Activated B cell treated with CpG ODN at 0.5 μM for 24 hours (primary cell): ENCODE measurements at regions of chr10 and their contacts with region 1.

Region 1: GRCh38 chr10:14564268-14564744 is 210.4 kb downstream of the FAM107B start:
- DNase-seq: no peak
- ATAC-seq: peak; percentile 50
- H3K4me3 Mint-ChIP-seq: peak overlapping the region; percentile 55
- H3K27ac Mint-ChIP-seq: peak overlapping the region; percentile 87
- H3K4me1 Mint-ChIP-seq: peaks cover 89% of the 10 kb centered on the region
- H3K27me3 Mint-ChIP-seq: no peaks in the 10 kb centered on the region
- CTCF ChIP-seq: no peak

Region 2: GRCh38 chr10:14385596-14386593 is 178.4 kb before region 1 on chr10:
- CTCF ChIA-PET with region 1: no interaction called
- POLR2A ChIA-PET with region 1: no interaction called
- intact Hi-C with region 1: no loop called
- DNase-seq: no peak
- ATAC-seq: no peak
- H3K4me3 Mint-ChIP-seq: no peak overlapping the region
- H3K27ac Mint-ChIP-seq: no peak overlapping the region
- H3K4me1 Mint-ChIP-seq: peaks cover 17% of the 10 kb centered on the region
- H3K27me3 Mint-ChIP-seq: peaks cover 17% of the 10 kb centered on the region
- CTCF ChIP-seq: no peak

Region 3: DNA sequence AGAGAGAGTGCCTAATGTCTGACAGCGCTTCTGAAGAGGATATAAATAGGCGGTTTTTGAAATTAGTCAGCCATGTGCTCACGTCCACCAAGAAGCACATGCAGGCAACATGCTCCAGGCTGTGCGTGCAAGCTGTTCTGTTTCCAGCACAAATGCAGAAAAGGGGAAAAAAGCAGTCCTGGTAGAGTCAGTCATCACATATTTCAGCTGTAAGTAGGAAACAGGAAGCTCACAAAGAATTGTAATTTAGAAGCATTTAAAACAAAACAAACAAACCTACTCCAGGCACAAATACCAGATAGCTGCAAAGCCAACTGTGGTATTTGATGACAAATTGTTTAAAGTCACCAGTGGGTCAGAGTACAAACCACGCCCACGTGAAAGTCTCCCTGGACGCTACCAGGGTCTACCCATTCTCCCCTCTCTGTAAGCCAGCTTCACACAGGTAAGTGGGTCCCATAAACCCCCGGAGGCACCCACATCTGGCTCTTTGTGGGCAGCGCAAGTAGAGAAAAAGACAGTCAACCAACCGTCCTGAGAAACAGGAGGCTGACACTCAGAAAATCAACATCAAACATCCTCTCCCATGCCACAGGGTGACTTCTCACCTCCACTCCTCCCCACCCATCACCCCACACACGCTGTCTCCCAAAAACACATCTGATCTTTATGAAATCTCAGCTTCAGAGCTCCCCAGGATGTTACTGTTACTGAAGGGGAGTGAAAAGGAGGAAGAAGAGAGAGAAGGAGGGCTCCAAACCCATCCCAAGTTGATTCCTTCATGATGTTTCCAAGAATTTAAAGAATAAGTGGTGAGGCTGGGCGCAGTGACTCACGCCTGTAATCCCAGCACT is 24.0 kb after region 1 on chr10:
- CTCF ChIA-PET with region 1: no interaction called
- POLR2A ChIA-PET with region 1: interaction called, 5 read pairs
- intact Hi-C with region 1: loop called (anchors 2 kb)
- DNase-seq: no peak
- ATAC-seq: peak; percentile 61
- H3K4me3 Mint-ChIP-seq: peak overlapping the region; percentile 65
- H3K27ac Mint-ChIP-seq: peak overlapping the region; percentile 89
- H3K4me1 Mint-ChIP-seq: peaks cover 92% of the 10 kb centered on the region
- H3K27me3 Mint-ChIP-seq: no peaks in the 10 kb centered on the region
- CTCF ChIP-seq: no peak

Region 4: GRCh38 chr10:14659626-14660196 is 95.4 kb after region 1 on chr10:
- CTCF ChIA-PET with region 1: no interaction called
- POLR2A ChIA-PET with region 1: no interaction called
- intact Hi-C with region 1: no loop called
- DNase-seq: no peak
- ATAC-seq: peak; percentile 68
- H3K4me3 Mint-ChIP-seq: peak overlapping the region; percentile 78
- H3K27ac Mint-ChIP-seq: peak overlapping the region; percentile 94
- H3K4me1 Mint-ChIP-seq: peaks cover 85% of the 10 kb centered on the region
- H3K27me3 Mint-ChIP-seq: no peaks in the 10 kb centered on the region
- CTCF ChIP-seq: no peak